AG04449 (cell line): ENCODE measurements at regions of chr1 and their contacts with region 1.

Region 1: DNA sequence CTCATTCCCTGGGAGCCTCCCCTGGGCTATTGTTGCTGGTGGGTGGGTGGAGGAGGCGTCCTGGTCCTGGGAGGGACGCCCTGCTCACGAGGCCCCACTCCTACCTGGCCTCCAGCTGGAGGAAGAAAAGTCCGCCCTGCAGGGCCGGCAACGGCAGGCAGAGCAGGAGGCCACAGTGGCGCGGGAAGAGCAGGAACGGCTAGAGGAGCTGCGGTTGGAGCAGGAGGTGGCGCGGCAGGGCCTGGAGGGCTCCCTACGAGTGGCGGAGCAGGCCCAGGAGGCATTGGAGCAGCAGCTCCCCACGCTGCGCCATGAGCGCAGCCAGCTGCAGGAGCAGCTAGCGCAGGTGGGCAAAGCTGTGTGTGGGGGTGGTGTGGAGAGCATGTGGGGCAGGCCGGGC is 24.9 kb downstream of the CROCC start:
- DNase-seq: no peak
- H3K4me3 ChIP-seq: no peak overlapping the region
- CTCF ChIP-seq: no peak

Region 2: GRCh38 chr1:16926491-16927073 is 20.1 kb before region 1 on chr1:
- CTCF ChIA-PET with region 1: no interaction called
- POLR2A ChIA-PET with region 1: no interaction called
- DNase-seq: no peak
- H3K4me3 ChIP-seq: no peak overlapping the region
- CTCF ChIP-seq: no peak

Region 3: GRCh38 chr1:16960560-16961296 is 14.1 kb after region 1 on chr1:
- CTCF ChIA-PET with region 1: interaction called, 78 read pairs
- POLR2A ChIA-PET with region 1: no interaction called
- DNase-seq: no peak
- H3K4me3 ChIP-seq: peak overlapping the region; percentile 48
- CTCF ChIP-seq: peak; percentile 90

Region 4: GRCh38 chr1:16978567-16979474 is 32.2 kb after region 1 on chr1:
- CTCF ChIA-PET with region 1: interaction called, 12 read pairs
- POLR2A ChIA-PET with region 1: no interaction called
- DNase-seq: peak; percentile 84
- H3K4me3 ChIP-seq: peak overlapping the region; percentile 76
- CTCF ChIP-seq: no peak

Region 5: GRCh38 chr1:17023102-17023501 is 76.5 kb after region 1 on chr1:
- CTCF ChIA-PET with region 1: interaction called, 10 read pairs
- POLR2A ChIA-PET with region 1: no interaction called
- DNase-seq: no peak
- H3K4me3 ChIP-seq: no peak overlapping the region
- CTCF ChIP-seq: no peak